ENCODE measurements at regions of chr6 and their contacts with region 1.

Region 1: DNA sequence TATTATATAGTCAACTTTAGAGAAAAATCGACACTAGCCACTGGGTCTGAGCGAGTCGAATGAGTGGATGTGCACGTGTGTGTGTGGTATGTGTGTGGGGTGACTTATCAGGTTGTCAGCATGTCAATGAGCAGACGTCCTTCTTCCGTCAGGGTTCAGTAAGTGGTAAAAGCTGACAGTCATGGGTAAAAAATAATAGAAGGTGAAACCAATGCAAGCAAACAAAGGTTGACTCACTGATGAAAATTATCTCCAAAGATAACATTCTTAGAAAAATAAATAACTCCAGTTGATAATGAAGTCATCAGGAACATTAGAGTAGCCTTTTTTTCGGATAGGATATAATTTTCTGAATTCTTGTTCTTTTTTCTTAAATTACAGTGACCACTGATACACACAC is 243.8 kb upstream of the FOXQ1 start:
- DNase-seq: no peak
- H3K4me3 ChIP-seq: no peak overlapping the region
- H3K4me3 Mint-ChIP-seq: no peak overlapping the region
- H3K27ac Mint-ChIP-seq: no peak overlapping the region
- H3K4me1 ChIP-seq: peaks cover 60% of the 10 kb centered on the region
- H3K4me1 Mint-ChIP-seq: peaks cover 35% of the 10 kb centered on the region
- H3K27me3 ChIP-seq: no peaks in the 10 kb centered on the region
- H3K27me3 Mint-ChIP-seq: no peaks in the 10 kb centered on the region
- CTCF ChIP-seq: no peak

Region 2: GRCh38 chr6:701700-702479 is 366.2 kb before region 1 on chr6:
- CTCF ChIA-PET with region 1: no interaction called
- POLR2A ChIA-PET with region 1: no interaction called
- intact Hi-C with region 1: no loop called
- DNase-seq: peak in 1 of 2 experiments; percentile 25
- H3K4me3 ChIP-seq: no peak overlapping the region
- H3K4me3 Mint-ChIP-seq: no peak overlapping the region
- H3K27ac Mint-ChIP-seq: no peak overlapping the region
- H3K4me1 ChIP-seq: no peaks in the 10 kb centered on the region
- H3K4me1 Mint-ChIP-seq: no peaks in the 10 kb centered on the region
- H3K27me3 ChIP-seq: no peaks in the 10 kb centered on the region; the same call in 1 of the 2 replicates
- H3K27me3 Mint-ChIP-seq: peaks cover 4% of the 10 kb centered on the region
- CTCF ChIP-seq: peak; percentile 15 to 35

Region 3: DNA sequence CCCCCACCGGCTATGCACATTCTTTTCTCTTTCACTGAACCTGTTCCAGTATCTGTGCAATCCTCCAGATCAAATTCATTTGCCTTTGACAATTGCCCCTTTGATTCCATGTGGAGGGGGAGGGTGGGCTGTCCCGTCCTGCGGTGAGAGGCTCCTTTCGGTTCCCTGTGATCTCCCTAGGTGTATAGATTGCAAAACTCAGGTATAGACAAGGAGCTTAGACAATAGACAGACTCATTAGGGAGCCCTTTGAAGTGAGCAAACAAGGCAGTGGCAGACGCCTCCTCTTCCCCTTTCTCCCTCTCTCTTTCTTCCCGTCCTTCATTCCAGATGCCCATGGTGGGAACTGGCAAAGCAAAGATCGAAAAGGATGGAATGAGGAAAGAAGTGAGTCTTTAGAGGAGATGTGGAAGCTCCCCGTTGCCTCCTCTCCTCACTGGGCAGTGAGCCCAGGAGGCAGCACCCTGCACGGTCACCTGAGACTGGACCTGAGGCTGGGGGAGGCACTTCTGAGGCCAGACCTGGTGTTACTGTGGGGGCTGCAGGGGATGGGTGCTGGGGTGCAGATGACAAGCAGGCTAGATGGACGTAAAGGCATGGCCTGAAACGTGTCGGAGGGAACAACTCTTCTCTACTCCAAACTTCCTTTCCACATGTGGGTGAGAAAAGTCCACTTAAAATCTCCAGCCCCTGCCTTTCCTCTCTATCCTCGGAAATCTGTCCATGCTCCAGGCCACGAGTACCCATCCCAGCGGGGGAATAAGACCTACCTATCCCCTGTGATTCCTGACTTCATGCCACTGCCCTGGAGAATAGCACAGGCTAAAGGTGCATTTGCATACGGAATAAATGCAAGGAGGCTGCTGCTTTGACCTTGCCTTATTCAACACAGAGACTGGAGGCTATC is 12.8 kb before region 1 on chr6:
- CTCF ChIA-PET with region 1: no interaction called
- POLR2A ChIA-PET with region 1: interaction called, 3 read pairs
- intact Hi-C with region 1: loop called (anchors 2 kb)
- DNase-seq: peak; percentile 93
- H3K4me3 ChIP-seq: no peak overlapping the region
- H3K4me3 Mint-ChIP-seq: no peak overlapping the region
- H3K27ac Mint-ChIP-seq: no peak overlapping the region
- H3K4me1 ChIP-seq: peaks cover 52% of the 10 kb centered on the region
- H3K4me1 Mint-ChIP-seq: peaks cover 18% of the 10 kb centered on the region
- H3K27me3 ChIP-seq: no peaks in the 10 kb centered on the region
- H3K27me3 Mint-ChIP-seq: no peaks in the 10 kb centered on the region
- CTCF ChIP-seq: no peak

Region 4: GRCh38 chr6:1091900-1092299 is 23.8 kb after region 1 on chr6:
- CTCF ChIA-PET with region 1: no interaction called
- POLR2A ChIA-PET with region 1: no interaction called
- intact Hi-C with region 1: no loop called
- DNase-seq: no peak
- H3K4me3 ChIP-seq: no peak overlapping the region
- H3K4me3 Mint-ChIP-seq: no peak overlapping the region
- H3K27ac Mint-ChIP-seq: no peak overlapping the region
- H3K4me1 ChIP-seq: no peaks in the 10 kb centered on the region
- H3K4me1 Mint-ChIP-seq: no peaks in the 10 kb centered on the region
- H3K27me3 ChIP-seq: no peaks in the 10 kb centered on the region
- H3K27me3 Mint-ChIP-seq: no peaks in the 10 kb centered on the region
- CTCF ChIP-seq: no peak

Region 5: GRCh38 chr6:1153696-1154245 is 85.7 kb after region 1 on chr6:
- CTCF ChIA-PET with region 1: no interaction called
- POLR2A ChIA-PET with region 1: no interaction called
- intact Hi-C with region 1: no loop called
- DNase-seq: no peak
- H3K4me3 ChIP-seq: no peak overlapping the region
- H3K4me3 Mint-ChIP-seq: no peak overlapping the region
- H3K27ac Mint-ChIP-seq: no peak overlapping the region
- H3K4me1 ChIP-seq: no peaks in the 10 kb centered on the region
- H3K4me1 Mint-ChIP-seq: no peaks in the 10 kb centered on the region
- H3K27me3 ChIP-seq: no peaks in the 10 kb centered on the region
- H3K27me3 Mint-ChIP-seq: no peaks in the 10 kb centered on the region
- CTCF ChIP-seq: no peak

Measured in Caco-2 (cell line).